Mucosa of descending colon (tissue), 3 donors: ENCODE measurements at regions of chr12 and their contacts with region 1.

Region 1: DNA sequence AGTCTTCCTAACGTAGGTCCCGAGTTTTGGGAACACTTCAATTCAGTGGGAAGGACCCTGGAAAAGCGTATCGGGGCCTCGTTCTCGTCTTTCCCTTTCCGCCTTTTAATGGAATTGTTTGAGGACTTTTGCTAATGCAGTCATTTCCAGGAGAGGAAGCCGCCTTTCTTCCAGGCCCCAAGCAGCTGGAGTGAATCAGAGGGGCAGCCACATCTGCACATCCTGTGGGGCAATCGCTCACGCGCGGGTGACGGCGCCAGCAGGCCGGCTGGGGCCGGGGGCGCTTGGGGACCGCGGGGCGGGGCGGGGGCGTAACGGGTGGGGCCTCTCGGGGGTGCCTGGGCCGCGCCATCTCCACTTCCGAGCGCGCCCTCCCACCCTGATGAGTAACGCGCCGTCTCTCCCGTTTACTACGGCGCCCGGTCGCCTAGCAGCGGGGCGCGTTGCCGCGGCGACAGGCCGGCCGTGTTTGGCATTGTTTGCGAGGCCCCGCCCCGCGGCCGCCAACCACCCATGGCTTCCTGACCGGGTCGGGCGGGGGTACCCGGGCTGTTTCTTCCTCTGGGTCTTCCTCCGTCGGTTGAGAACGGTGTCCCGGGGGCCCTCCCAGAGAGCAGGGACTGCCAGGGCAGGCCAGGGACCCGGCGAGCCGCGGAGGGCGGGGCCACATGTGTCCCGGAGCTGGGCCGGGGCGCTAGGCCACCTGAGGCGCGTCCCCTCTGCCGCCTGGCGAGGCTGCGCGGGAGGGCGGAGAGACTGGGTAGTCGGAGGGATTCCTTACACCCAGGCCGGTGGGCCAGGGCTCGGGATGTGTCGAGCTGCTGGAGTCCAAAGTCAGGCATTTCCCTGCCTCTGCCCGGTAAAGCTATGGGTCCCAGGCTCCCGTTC is 2.3 kb downstream of the GSG1 start:
- DNase-seq: peak; percentile 90 to 95 (median 91)
- ATAC-seq: peak; percentile 84
- H3K4me3 ChIP-seq: peak overlapping the region; percentile 11
- H3K4me1 ChIP-seq: peaks cover 25% of the 10 kb centered on the region
- CTCF ChIP-seq: no peak

Region 2: DNA sequence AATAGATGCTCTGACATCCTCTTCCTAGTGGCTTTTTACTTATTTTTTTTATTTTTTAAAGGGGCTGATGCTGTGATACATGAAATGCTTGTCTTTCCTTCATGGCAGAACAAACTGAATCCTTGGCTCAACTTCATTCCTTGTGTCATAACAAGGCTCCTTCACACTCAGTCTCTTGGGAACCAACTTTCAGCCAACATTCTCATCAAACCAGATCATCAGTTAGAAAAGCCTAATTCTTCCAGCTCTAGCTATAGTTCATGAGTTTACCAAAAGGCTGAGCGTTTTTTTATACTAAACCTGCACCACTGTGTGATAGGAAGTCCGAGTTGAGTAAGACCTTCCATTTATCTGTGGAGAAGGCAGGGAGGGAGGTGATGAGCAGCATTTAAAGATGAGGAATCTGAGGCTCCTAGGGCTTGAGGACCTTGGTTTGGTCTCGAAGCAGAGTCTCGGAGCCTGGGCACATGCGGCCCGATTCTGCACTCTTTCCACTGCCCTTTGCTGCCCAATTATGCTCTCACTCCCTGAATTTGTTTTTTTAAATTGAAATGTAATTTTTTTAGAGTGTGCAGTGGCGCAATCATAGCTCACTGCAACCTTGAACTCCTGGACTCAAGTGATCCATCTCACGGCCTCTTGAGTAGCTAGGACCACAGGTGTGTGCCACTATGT is 157.4 kb before region 1 on chr12:
- intact Hi-C with region 1: no loop called
- DNase-seq: no peak
- ATAC-seq: no peak
- H3K4me3 ChIP-seq: no peak overlapping the region
- H3K4me1 ChIP-seq: no peaks in the 10 kb centered on the region
- CTCF ChIP-seq: no peak

Region 3: DNA sequence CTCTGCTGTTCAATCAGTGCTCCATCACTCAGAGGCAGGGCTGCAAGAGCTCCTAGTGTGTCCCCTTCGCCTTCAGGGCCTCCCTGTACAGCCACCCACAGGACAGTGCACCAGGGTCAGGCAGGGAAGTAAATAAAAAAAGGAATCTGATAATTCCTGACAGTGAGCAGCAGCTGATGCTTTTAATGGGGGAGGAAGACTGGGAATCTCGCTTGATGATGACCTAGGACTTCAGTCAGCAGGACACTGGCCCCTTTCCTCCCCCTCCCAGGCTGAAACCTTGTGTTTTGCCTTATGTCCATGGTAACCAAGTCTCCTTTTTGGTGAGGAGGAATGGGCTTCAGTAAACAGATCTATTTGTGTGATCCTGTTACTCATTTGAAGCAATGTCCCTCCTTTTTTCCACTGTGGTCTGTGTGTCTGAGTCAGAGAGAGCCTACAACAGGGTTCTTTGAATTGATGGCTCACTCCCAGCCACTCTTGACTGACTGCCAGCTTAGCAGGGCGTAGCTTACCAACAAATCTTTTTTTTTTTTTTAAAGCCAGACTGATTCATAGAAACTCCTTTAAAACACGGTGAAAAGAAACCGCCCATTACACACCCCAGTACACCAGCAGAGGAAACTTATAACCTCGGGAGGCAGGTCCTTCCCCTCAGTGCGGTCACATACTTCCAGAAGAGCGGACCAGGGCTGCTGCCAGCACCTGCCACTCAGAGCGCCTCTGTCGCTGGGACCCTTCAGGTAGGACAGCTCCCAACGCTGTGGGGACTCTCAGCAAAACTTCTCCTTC is 95.2 kb after region 1 on chr12 and contains the start of gene EMP1:
- intact Hi-C with region 1: loop called (anchors 5 to 10 kb)
- DNase-seq: peak; percentile 80 to 98 (median 88)
- ATAC-seq: peak; percentile 88
- H3K4me3 ChIP-seq: peak within 1 kb of the TSS; percentile 22
- H3K4me1 ChIP-seq: peaks cover 22% of the 10 kb centered on the region
- CTCF ChIP-seq: no peak
- total RNA-seq, gene EMP1: 245 to 680 (median 667) TPM

Region 4: GRCh38 chr12:13326076-13326475 is 224.9 kb after region 1 on chr12:
- intact Hi-C with region 1: no loop called
- DNase-seq: no peak
- ATAC-seq: no peak
- H3K4me3 ChIP-seq: no peak overlapping the region
- H3K4me1 ChIP-seq: no peaks in the 10 kb centered on the region
- CTCF ChIP-seq: no peak